Activated CD4-positive, alpha-beta T cell treated with anti-CD3 and anti-CD28 coated beads, Interleukin-2, amount 10 ng/mL, durations not matched to agents 24 days and 14 days (primary cell): ENCODE measurements at regions of chr13 and their contacts with region 1.

Region 1: DNA sequence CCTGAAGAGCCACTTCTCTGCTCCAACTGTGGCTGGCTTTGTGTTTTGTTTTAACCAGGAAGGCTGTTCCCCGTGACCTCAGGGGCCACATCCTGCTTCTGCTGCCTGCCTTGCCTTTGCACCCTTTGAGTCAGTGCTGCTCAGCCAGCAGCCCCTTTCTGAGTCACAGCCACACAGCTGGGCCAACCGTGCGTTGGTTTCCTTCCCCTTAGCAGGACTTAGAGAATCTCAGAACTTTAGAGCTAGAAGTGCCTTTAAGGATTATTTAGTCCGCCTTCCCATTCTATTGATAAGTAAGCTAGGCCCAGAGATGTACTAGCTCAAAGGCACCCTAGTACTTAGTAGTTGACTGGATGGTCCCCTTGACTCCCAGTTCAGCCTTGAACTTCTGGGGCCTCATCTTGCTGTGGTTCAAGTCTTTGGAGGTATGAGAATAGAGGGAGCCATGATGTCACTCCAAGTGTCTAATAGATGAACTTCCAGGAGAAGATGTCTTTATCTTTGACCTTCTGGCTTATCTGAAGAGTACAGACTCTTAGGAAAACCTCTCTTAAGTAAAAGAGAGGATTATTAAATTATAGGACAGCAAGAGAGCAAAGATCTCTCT is 8.0 kb downstream of the RGCC start:
- DNase-seq: peak; percentile 96
- H3K4me3 Mint-ChIP-seq: peak overlapping the region; percentile 88
- H3K27ac Mint-ChIP-seq: peak overlapping the region; percentile 99
- H3K4me1 Mint-ChIP-seq: peaks cover 79% of the 10 kb centered on the region
- H3K27me3 Mint-ChIP-seq: no peaks in the 10 kb centered on the region

Region 2: DNA sequence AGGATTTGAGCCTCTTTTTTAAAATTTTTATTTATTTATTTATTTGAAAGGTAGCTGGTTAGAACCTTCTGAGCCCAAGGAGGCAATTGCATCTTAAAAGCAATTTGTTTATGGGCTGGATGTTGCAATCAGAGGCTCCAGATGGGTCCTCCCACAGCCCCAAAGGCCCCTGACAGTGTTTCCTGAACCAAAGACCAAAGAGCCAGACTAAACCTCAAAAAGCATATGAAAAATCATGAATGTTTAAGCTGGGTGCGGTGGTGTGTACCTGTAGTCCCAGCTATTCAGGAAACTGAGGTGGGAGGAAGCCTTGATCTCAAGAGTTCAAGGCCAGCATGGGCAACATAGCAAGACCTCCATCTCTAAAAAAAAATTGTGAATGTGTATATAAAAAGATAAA is 75.8 kb before region 1 on chr13:
- intact Hi-C with region 1: no loop called
- DNase-seq: peak; percentile 44
- H3K4me3 Mint-ChIP-seq: no peak overlapping the region
- H3K27ac Mint-ChIP-seq: no peak overlapping the region
- H3K4me1 Mint-ChIP-seq: no peaks in the 10 kb centered on the region
- H3K27me3 Mint-ChIP-seq: peaks cover 3% of the 10 kb centered on the region

Region 3: DNA sequence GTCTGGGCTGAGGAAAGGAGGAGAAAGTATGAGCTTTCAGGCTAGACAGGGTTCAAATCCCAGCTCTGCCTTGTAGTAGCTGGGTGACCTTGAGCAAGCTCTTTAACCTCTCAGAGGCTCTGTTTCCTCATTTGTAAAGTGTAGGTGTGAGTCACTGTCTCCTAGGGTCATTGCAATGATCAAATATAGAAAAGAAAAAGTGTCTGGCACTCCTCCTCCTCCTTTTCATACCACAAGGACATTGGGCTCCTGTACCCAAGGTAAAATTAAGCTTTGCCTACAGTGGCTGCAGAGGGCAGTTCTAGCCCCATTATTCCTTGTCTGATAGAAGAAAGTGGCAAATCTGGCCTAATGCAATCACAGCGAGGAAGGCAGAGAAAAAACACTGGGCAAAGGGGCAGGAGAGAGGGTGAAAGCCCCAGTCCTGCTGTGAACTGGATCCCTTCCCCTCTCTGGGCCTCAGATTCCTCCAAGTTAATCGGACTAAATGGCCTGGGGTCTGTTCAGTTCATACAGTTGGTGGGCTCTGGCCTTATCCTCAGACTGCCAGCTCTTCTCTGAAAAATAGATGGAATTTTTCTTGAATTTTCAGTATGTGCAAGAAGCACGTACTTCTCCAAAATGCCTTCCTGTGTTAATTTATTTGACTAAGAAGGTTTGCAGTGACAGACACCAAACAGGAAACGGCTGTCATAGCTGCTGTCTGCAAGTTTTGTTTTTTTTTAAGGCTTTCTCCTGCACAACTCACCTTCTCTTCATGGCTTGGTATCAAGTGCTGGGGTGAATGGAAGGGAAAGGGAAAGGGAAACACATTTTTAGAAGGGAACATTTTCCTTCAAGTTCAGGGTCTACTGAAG is 27.3 kb after region 1 on chr13:
- intact Hi-C with region 1: loop called (anchors 1 kb)
- DNase-seq: peak; percentile 79
- H3K4me3 Mint-ChIP-seq: peak overlapping the region; percentile 73
- H3K27ac Mint-ChIP-seq: peak overlapping the region; percentile 93
- H3K4me1 Mint-ChIP-seq: peaks cover 62% of the 10 kb centered on the region
- H3K27me3 Mint-ChIP-seq: no peaks in the 10 kb centered on the region

Region 4: GRCh38 chr13:41502673-41503072 is 37.3 kb after region 1 on chr13:
- intact Hi-C with region 1: loop called (anchors 1 kb)
- DNase-seq: no peak
- H3K4me3 Mint-ChIP-seq: no peak overlapping the region
- H3K27ac Mint-ChIP-seq: no peak overlapping the region
- H3K4me1 Mint-ChIP-seq: peaks cover 40% of the 10 kb centered on the region
- H3K27me3 Mint-ChIP-seq: no peaks in the 10 kb centered on the region

Region 5: GRCh38 chr13:41520660-41521630 is 55.6 kb after region 1 on chr13:
- intact Hi-C with region 1: no loop called
- DNase-seq: peak; percentile 53
- H3K4me3 Mint-ChIP-seq: no peak overlapping the region
- H3K27ac Mint-ChIP-seq: no peak overlapping the region
- H3K4me1 Mint-ChIP-seq: peaks cover 2% of the 10 kb centered on the region
- H3K27me3 Mint-ChIP-seq: no peaks in the 10 kb centered on the region

Region 6: DNA sequence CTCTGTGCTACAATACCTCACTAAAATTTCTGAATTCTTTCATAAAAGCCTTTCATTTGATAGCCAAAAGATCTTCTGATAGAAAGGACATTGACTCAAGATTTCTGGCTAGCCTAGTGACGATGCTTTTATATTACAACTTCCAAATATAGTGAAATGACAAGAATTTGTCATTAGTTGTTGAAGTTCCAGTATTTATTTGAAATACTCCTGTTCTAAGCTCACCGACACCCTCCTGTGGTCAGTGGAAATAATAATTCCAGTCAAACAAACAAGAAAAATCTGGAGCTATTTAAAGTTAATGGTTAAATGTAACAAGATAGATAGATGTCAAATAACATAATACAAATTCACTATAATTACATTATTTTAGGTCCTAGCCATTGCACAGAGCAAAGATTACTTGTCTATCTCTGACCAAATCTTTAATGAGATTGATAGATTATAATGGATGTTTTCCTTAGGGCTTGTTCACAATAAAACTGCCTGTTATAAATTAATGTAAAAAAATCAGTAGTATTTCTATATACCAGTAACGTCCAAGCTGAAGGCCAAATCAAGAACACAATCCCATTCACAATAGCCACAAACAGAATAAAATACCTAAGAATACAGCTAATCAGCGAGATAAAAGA is 187.5 kb after region 1 on chr13:
- intact Hi-C with region 1: loop called (anchors 2 kb)
- DNase-seq: peak; percentile 78
- H3K4me3 Mint-ChIP-seq: no peak overlapping the region
- H3K27ac Mint-ChIP-seq: no peak overlapping the region
- H3K4me1 Mint-ChIP-seq: peaks cover 11% of the 10 kb centered on the region
- H3K27me3 Mint-ChIP-seq: no peaks in the 10 kb centered on the region

Region 7: GRCh38 chr13:42039946-42040729 is 574.8 kb after region 1 on chr13:
- intact Hi-C with region 1: loop called (anchors 5 kb)
- DNase-seq: peak; percentile 95
- H3K4me3 Mint-ChIP-seq: peak overlapping the region; percentile 84
- H3K27ac Mint-ChIP-seq: peak overlapping the region; percentile 83
- H3K4me1 Mint-ChIP-seq: peaks cover 19% of the 10 kb centered on the region
- H3K27me3 Mint-ChIP-seq: peaks cover 31% of the 10 kb centered on the region